ENCODE measurements at regions of chr5 and their contacts with region 1.

Region 1: DNA sequence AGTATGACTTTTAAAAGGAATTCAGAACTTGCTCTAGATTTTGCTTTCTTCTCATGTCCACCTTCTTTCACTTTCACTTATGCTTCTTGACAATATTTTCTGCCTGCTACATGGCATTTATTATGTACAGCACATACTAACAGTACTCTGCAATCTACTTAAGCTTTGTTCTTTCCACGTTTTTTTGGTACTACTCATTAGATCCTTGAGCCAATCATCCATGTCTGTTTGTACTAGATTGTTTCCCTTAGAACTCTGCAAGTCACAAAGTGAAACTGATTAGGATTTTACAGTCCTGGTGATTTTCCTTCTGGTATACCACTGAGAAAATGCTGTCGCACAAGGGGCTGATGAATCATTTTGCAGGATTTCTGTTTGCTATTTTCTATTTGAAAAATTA is 78.3 kb downstream of the PARP8 start:
- DNase-seq: no peak
- ATAC-seq: no peak
- H3K4me3 ChIP-seq: peak overlapping the region; percentile 59 to 76
- H3K27ac ChIP-seq: no peak overlapping the region
- H3K4me1 ChIP-seq: peaks cover 0 to 2% of the 10 kb centered on the region in 2 donors
- H3K27me3 ChIP-seq: no peaks in the 10 kb centered on the region

Region 2: GRCh38 chr5:50667653-50668595 is 76.9 kb before region 1 on chr5:
- intact Hi-C with region 1: loop called (anchors 5 to 10 kb)
- DNase-seq: peak; percentile 87 to 90
- ATAC-seq: peak; percentile 29
- H3K4me3 ChIP-seq: peak overlapping the region; percentile 40 to 75
- H3K27ac ChIP-seq: peak overlapping the region; percentile 1 to 78
- H3K4me1 ChIP-seq: no peaks in the 10 kb centered on the region
- H3K27me3 ChIP-seq: no peaks in the 10 kb centered on the region